Caco-2 (cell line): ENCODE measurements at regions of chr1 and their contacts with region 1.

Region 1: DNA sequence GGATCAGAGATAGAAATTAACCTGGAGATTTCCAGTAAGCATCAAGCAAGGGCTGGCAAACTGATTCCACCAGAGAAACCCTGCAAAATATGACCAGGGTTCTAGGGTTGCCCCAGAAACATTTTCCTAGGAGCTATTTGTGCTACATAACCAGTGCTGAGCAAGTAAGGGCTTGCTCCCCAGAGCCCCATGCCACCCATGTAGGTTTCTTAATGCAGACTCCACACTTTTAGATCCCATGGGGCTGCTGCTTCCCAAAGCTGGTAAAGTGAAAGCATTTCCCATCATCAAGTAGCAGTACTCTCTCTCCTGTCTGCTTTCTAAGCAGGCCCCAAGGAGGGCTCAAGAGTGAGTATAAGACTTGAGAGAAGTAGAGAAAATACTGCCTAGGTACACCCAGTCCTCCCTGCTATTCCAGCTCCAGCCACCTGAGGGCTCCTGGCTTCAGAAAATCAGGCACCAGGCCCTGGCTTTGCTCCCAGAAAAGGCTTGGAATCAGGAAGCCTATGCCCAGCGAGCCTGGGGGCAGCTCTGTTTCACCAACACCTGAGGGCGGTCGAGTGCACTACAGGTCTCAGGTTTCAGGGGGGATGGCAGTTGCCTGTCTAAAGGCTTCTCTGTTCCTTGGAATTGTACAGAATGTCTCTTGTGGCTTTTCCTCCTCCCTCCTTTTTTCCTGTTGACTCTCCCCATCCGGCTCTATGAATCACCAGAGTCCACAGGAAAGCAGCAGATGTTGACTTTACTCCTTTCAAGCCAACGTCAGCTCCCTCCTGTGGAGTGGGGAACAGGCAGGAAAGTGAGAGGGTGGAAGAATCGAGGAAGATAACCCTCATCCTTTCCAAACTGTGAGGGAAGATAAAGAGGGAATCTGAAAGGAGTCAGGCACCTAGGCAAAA is 6.2 kb upstream of the ANKRD35 start:
- DNase-seq: peak; percentile 95 to 97
- H3K4me3 ChIP-seq: no peak overlapping the region
- H3K4me3 Mint-ChIP-seq: peak overlapping the region; percentile 66
- H3K27ac Mint-ChIP-seq: peak overlapping the region; percentile 84
- H3K4me1 ChIP-seq: peaks cover 8% of the 10 kb centered on the region
- H3K4me1 Mint-ChIP-seq: peaks cover 7% of the 10 kb centered on the region
- H3K27me3 ChIP-seq: no peaks in the 10 kb centered on the region
- H3K27me3 Mint-ChIP-seq: no peaks in the 10 kb centered on the region
- CTCF ChIP-seq: peak; percentile 91 to 95

Region 2: GRCh38 chr1:145777357-145778145 is 114.3 kb before region 1 on chr1:
- CTCF ChIA-PET with region 1: no interaction called
- POLR2A ChIA-PET with region 1: no interaction called
- intact Hi-C with region 1: no loop called
- DNase-seq: no peak
- H3K4me3 ChIP-seq: no peak overlapping the region
- H3K4me3 Mint-ChIP-seq: no peak overlapping the region
- H3K27ac Mint-ChIP-seq: no peak overlapping the region
- H3K4me1 ChIP-seq: peaks cover 7% of the 10 kb centered on the region
- H3K4me1 Mint-ChIP-seq: peaks cover 23% of the 10 kb centered on the region
- H3K27me3 ChIP-seq: no peaks in the 10 kb centered on the region
- H3K27me3 Mint-ChIP-seq: no peaks in the 10 kb centered on the region
- CTCF ChIP-seq: no peak

Region 3: DNA sequence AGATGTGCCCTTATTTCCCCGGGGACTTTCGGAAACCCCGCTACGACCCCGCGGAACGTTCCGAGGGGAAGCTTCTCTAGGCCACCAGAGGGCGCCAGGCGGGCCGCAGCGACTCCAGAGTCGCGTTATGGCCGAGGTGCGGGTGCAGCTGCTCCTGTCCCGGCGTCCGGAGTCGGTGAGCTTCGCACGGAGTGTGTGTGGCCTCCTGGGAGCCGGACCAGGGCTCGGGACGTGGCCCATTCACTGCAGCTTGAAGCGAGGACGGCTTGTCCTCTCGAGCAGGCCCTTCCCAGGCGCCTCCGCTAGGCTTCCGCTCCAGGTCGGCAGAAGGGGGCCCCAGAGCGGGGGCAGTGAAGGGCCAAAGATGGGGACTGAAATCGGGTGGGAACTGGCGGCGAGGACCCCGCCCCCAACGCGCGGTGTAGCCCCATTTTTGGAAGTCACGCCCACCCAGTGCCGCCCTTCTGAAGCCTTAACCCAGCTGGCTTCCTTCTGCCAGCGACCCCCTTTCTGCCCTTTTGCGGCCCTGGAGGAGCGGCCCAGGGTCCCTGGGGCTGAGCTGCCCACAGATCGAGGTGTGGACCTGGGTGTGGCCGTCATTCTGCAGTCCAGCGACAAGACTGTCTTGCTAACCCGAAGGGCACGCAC is 46.2 kb before region 1 on chr1 and contains the start of gene NUDT17:
- CTCF ChIA-PET with region 1: interaction called, 16 read pairs
- POLR2A ChIA-PET with region 1: no interaction called
- intact Hi-C with region 1: no loop called
- DNase-seq: peak; percentile 81 to 84
- H3K4me3 ChIP-seq: peak within 1 kb of the TSS; percentile 61
- H3K4me3 Mint-ChIP-seq: no peak within 1 kb of the TSS
- H3K27ac Mint-ChIP-seq: no peak within 1 kb of the TSS
- H3K4me1 ChIP-seq: peaks cover 7% of the 10 kb centered on the region
- H3K4me1 Mint-ChIP-seq: no peaks in the 10 kb centered on the region
- H3K27me3 ChIP-seq: no peaks in the 10 kb centered on the region
- H3K27me3 Mint-ChIP-seq: no peaks in the 10 kb centered on the region
- CTCF ChIP-seq: peak; percentile 91 to 96
- total RNA-seq, gene NUDT17: 4.8 and 6.4 TPM in 2 replicates

Region 4: GRCh38 chr1:145879775-145880174 is 12.1 kb before region 1 on chr1:
- CTCF ChIA-PET with region 1: no interaction called
- POLR2A ChIA-PET with region 1: no interaction called
- intact Hi-C with region 1: loop called (anchors 1 kb)
- DNase-seq: no peak
- H3K4me3 ChIP-seq: no peak overlapping the region
- H3K4me3 Mint-ChIP-seq: no peak overlapping the region
- H3K27ac Mint-ChIP-seq: peak overlapping the region; percentile 17
- H3K4me1 ChIP-seq: peaks cover 13% of the 10 kb centered on the region
- H3K4me1 Mint-ChIP-seq: peaks cover 11% of the 10 kb centered on the region
- H3K27me3 ChIP-seq: no peaks in the 10 kb centered on the region
- H3K27me3 Mint-ChIP-seq: peaks cover 10% of the 10 kb centered on the region
- CTCF ChIP-seq: no peak

Region 5: GRCh38 chr1:145912128-145912641 is 20.3 kb after region 1 on chr1:
- CTCF ChIA-PET with region 1: interaction called, 30 read pairs
- POLR2A ChIA-PET with region 1: no interaction called
- intact Hi-C with region 1: loop called (anchors 1 kb)
- DNase-seq: no peak
- H3K4me3 ChIP-seq: no peak overlapping the region
- H3K4me3 Mint-ChIP-seq: no peak overlapping the region
- H3K27ac Mint-ChIP-seq: no peak overlapping the region
- H3K4me1 ChIP-seq: no peaks in the 10 kb centered on the region
- H3K4me1 Mint-ChIP-seq: no peaks in the 10 kb centered on the region
- H3K27me3 ChIP-seq: no peaks in the 10 kb centered on the region
- H3K27me3 Mint-ChIP-seq: no peaks in the 10 kb centered on the region
- CTCF ChIP-seq: no peak

Region 6: GRCh38 chr1:145927063-145927886 is 35.4 kb after region 1 on chr1 and contains the start of gene RBM8A:
- CTCF ChIA-PET with region 1: interaction called, 9 read pairs
- POLR2A ChIA-PET with region 1: interaction called, 5 read pairs
- intact Hi-C with region 1: loop called (anchors 5 kb)
- DNase-seq: peak; percentile 95 to 97
- H3K4me3 ChIP-seq: peak within 1 kb of the TSS; percentile 84
- H3K4me3 Mint-ChIP-seq: no peak within 1 kb of the TSS
- H3K27ac Mint-ChIP-seq: no peak within 1 kb of the TSS
- H3K4me1 ChIP-seq: peaks cover 3% of the 10 kb centered on the region
- H3K4me1 Mint-ChIP-seq: peaks cover 6% of the 10 kb centered on the region
- H3K27me3 ChIP-seq: no peaks in the 10 kb centered on the region
- H3K27me3 Mint-ChIP-seq: no peaks in the 10 kb centered on the region
- CTCF ChIP-seq: peak; percentile 73 to 74
- total RNA-seq, gene RBM8A: 178 and 185 TPM in 2 replicates

Region 7: DNA sequence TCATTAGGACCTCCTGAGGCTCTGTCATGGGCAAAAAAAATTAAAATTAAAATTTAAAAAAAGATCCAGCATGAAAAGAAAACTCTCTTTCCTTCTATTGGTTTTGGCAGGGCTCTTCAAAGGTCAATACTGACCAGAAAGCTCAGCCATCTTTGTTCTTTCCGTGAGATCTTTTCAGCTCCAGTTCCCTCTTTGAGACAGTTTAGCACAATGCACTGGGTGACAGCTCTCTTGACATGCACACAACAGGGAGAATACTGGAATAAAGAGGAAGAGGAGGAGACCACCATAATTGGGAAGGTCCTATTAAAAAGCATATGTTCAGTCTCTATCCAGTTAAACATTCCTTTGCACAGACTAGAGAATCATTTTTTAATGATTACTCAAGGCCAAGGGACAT is 59.7 kb after region 1 on chr1:
- CTCF ChIA-PET with region 1: no interaction called
- POLR2A ChIA-PET with region 1: no interaction called
- intact Hi-C with region 1: no loop called
- DNase-seq: no peak
- H3K4me3 ChIP-seq: no peak overlapping the region
- H3K4me3 Mint-ChIP-seq: no peak overlapping the region
- H3K27ac Mint-ChIP-seq: no peak overlapping the region
- H3K4me1 ChIP-seq: peaks cover 10% of the 10 kb centered on the region; the same call in 1 of the 2 replicates
- H3K4me1 Mint-ChIP-seq: no peaks in the 10 kb centered on the region
- H3K27me3 ChIP-seq: no peaks in the 10 kb centered on the region
- H3K27me3 Mint-ChIP-seq: no peaks in the 10 kb centered on the region
- CTCF ChIP-seq: no peak

Region 8: GRCh38 chr1:145978854-145979759 is 87.3 kb after region 1 on chr1:
- CTCF ChIA-PET with region 1: interaction called, 8 read pairs
- POLR2A ChIA-PET with region 1: no interaction called
- intact Hi-C with region 1: loop called (anchors 1 kb)
- DNase-seq: peak; percentile 82 to 92
- H3K4me3 ChIP-seq: no peak overlapping the region
- H3K4me3 Mint-ChIP-seq: no peak overlapping the region
- H3K27ac Mint-ChIP-seq: no peak overlapping the region
- H3K4me1 ChIP-seq: peaks cover 32% of the 10 kb centered on the region
- H3K4me1 Mint-ChIP-seq: no peaks in the 10 kb centered on the region
- H3K27me3 ChIP-seq: no peaks in the 10 kb centered on the region
- H3K27me3 Mint-ChIP-seq: no peaks in the 10 kb centered on the region
- CTCF ChIP-seq: peak in 1 of 2 experiments; percentile 37

Region 9: GRCh38 chr1:146012737-146013403 is 121.0 kb after region 1 on chr1:
- CTCF ChIA-PET with region 1: interaction called, 5 read pairs
- POLR2A ChIA-PET with region 1: no interaction called
- intact Hi-C with region 1: loop called (anchors 1 kb)
- DNase-seq: peak in 1 of 2 experiments; percentile 65
- H3K4me3 ChIP-seq: no peak overlapping the region
- H3K4me3 Mint-ChIP-seq: no peak overlapping the region
- H3K27ac Mint-ChIP-seq: no peak overlapping the region
- H3K4me1 ChIP-seq: no peaks in the 10 kb centered on the region
- H3K4me1 Mint-ChIP-seq: peaks cover 8% of the 10 kb centered on the region
- H3K27me3 ChIP-seq: no peaks in the 10 kb centered on the region
- H3K27me3 Mint-ChIP-seq: peaks cover 7% of the 10 kb centered on the region
- CTCF ChIP-seq: peak; percentile 50 to 81

Region 10: GRCh38 chr1:147794570-147794969 is 1902.7 kb after region 1 on chr1:
- CTCF ChIA-PET with region 1: no interaction called
- POLR2A ChIA-PET with region 1: no interaction called
- intact Hi-C with region 1: no loop called
- DNase-seq: no peak
- H3K4me3 ChIP-seq: no peak overlapping the region
- H3K4me3 Mint-ChIP-seq: no peak overlapping the region
- H3K27ac Mint-ChIP-seq: no peak overlapping the region
- H3K4me1 ChIP-seq: no peaks in the 10 kb centered on the region
- H3K4me1 Mint-ChIP-seq: no peaks in the 10 kb centered on the region
- H3K27me3 ChIP-seq: no peaks in the 10 kb centered on the region
- H3K27me3 Mint-ChIP-seq: no peaks in the 10 kb centered on the region
- CTCF ChIP-seq: no peak